Head of caudate nucleus (tissue), 42 donors: ENCODE measurements at regions of chr6 and their contacts with region 1.

Region 1: GRCh38 chr6:26537846-26538571 is at the start of gene HMGN4:
- DNase-seq: peak; percentile 64 to 93 (median 84)

Region 2: GRCh38 chr6:26312501-26313390 is 225.3 kb before region 1 on chr6:
- intact Hi-C with region 1: loop called (anchors 10 kb)
- DNase-seq: peak; percentile 63 to 94 (median 83)

Region 3: DNA sequence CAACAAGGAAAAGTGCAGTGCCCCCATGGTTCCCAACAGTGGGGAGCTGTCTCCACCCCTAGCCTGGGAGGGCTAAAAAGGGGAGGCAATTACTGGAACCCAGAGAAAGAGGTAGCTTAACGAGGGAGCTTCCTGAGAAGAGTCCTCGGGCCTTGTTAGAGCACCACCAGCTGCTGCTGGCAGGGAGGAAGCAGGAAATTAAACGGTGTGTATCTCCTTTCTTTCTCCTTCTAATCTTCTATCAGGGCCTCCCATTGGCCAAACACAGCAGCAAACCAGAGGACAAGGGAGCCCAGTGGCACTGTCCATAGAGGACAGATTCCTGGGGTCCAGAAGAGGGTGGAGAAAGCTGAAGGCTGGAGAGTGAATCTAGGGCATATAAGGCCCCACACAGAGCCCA is 162.7 kb before region 1 on chr6:
- intact Hi-C with region 1: no loop called
- DNase-seq: no peak

Region 4: GRCh38 chr6:26521600-26522391 is 16.2 kb before region 1 on chr6:
- intact Hi-C with region 1: loop called (anchors 2 kb)
- DNase-seq: peak; percentile 27 to 84 (median 68)

Region 5: DNA sequence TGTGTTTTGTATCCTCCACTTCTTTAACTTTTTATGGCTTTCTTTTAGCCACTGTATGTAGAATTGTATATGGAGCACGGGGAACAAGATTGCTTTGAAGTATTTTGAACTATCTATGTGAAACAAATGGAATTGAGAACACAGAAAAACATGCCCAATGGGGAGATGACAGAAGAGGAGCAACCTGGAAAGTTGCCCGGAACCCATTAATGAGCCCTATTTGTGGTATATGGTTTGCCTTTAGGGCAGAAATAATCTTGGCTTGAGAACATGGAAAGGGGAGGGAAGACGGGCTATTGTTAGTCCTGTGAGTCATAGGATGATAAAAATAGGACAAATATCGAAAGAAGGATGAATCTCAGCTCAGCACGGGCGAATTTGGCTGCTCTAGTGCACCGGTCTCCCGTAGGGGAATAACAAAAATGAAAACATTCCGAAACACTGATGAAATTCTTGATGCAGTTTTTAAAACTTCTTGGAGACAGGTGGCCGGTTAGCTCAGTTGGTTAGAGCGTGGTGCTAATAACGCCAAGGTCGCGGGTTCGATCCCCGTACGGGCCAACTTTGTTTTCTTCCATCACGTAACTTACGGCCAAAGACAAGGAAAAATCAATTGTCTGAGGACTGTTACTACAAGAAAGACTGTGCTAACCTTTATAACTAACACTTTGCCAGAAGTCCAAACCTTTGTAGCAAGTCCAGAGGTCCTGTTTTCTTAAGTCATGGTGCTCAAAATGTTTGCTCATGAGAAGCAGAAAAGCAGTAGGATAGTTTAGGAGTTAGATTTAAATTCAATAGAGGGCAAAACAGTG is 15.8 kb after region 1 on chr6:
- intact Hi-C with region 1: loop called (anchors 2 kb)
- DNase-seq: peak in 39 of 42 donors; percentile 41 to 91 (median 73)